IMR-90 (cell line): ENCODE measurements at regions of chr15 and their contacts with region 1.

Region 1: DNA sequence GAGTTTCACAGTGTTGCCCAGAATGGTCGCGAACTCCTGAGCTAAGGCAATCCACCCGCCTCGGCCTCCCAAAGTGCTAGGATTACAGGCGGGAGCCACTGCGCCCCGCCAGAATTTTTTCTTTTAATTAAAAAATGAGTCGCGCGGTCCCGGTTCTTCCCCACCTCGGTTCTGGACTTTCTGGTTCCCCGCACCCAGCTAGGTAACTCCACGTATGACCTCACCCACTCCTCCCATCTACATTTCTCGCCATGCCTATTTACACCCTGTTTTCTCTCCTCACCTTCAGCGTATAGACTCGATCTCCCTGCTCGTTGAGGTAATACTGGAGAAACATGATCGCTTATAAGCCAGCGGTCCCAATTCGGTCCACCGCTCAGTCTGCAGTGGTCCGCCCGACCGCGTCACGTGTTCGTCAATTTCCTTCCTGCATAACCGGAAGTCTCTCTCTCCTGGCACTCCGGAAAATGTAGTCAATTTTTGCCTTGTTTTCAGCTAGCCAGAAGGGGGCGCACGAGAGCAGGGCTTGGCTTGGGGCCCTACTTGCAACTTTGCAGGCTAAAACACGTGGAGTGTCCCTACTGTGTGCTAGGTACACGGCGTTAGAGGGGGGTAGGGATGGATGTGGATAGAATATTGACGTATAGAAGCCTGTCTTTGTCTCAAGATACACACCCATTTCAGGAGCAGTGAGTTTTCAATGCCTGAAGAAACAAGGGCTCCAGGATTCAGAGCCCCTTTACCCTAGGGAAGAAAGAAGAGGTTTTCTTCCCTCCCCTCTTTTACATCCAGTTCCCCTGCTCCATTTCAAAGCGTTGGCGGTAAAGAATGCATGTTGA is at the starts of genes NOP10 and NUTM1:
- DNase-seq: peak; percentile 93
- ATAC-seq: peak; percentile 84
- H3K4me3 ChIP-seq: peak within 1 kb of the TSS; percentile 90
- H3K27ac ChIP-seq: peak within 1 kb of the TSS; percentile 90
- H3K4me1 ChIP-seq: peaks cover 3% of the 10 kb centered on the region; the same call in 1 of the 2 replicates
- H3K27me3 ChIP-seq: no peaks in the 10 kb centered on the region
- CTCF ChIP-seq: peak; percentile 96
- POLR2A ChIP-seq: peak; percentile 75
- RAD21 ChIP-seq: peak; percentile 69
- total RNA-seq, gene NOP10: 141 and 211 TPM in 2 replicates
- total RNA-seq, gene NUTM1: not detected in 2 replicates

Region 2: GRCh38 chr15:34241372-34242330 is 101.3 kb before region 1 on chr15:
- CTCF ChIA-PET with region 1: no interaction called
- POLR2A ChIA-PET with region 1: no interaction called
- dilution Hi-C with region 1: no loop called
- in situ Hi-C with region 1: no loop called
- intact Hi-C with region 1: loop called (anchors 1 kb)
- DNase-seq: peak; percentile 51
- ATAC-seq: peak; percentile 59
- H3K4me3 ChIP-seq: no peak overlapping the region
- H3K27ac ChIP-seq: no peak overlapping the region
- H3K4me1 ChIP-seq: peaks cover 4% of the 10 kb centered on the region
- H3K27me3 ChIP-seq: no peaks in the 10 kb centered on the region
- CTCF ChIP-seq: peak; percentile 65
- POLR2A ChIP-seq: no peak
- RAD21 ChIP-seq: peak; percentile 47